ENCODE measurements at regions of chr9 and their contacts with region 1.

Region 1: DNA sequence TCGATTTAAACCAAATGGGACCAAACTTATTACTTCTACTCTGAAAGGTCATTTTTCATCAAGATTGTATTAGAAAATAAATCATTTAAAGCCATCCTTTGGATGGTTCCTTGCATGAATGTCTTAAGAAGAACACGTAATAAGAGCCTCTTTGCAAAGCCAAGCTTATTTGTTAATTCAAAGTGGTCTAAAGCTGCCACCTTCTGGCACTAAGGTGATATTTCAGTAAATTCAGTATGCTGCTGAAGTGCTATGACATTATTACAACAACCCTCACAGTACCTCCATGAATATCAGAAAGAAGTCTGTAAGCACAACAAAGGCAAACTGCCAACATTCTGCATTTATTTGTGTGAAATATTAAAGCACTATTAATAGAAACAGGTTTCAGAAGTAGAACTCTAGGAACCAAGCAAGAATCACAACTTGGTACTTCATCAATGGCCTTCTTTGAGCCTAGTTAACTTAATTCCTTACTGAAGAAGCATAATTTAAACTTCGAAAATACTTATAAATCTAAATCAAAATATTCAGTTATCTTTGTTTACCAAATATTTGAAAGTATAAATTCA is 53.1 kb upstream of the TYRP1 start:
- DNase-seq: peak; percentile 35
- H3K4me3 ChIP-seq: no peak overlapping the region
- H3K27ac ChIP-seq: no peak overlapping the region
- H3K4me1 ChIP-seq: no peaks in the 10 kb centered on the region
- H3K27me3 ChIP-seq: no peaks in the 10 kb centered on the region
- CTCF ChIP-seq: peak; percentile 64 to 72

Region 2: DNA sequence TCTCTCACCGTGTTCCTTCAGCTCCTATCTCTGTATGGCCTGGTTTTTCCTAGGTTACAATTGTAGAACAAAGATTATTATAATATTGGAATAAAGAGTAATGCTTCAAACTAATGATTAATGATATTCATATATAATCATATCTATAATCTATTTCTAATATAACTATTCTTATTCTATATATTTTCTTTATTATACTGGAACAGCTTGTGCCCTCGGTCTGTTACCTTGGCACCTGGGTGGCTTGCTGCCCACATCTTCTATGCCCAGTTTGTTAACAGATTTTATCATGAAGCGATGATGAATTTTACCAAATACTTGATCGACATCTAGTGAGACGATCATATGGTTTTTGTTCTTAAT is 310.5 kb before region 1 on chr9:
- CTCF ChIA-PET with region 1: no interaction called
- dilution Hi-C with region 1: no loop called
- in situ Hi-C with region 1: no loop called
- intact Hi-C with region 1: loop called (anchors 10 kb)
- DNase-seq: no peak
- H3K4me3 ChIP-seq: no peak overlapping the region
- H3K27ac ChIP-seq: no peak overlapping the region
- H3K4me1 ChIP-seq: no peaks in the 10 kb centered on the region
- H3K27me3 ChIP-seq: no peaks in the 10 kb centered on the region
- CTCF ChIP-seq: no peak

Region 3: DNA sequence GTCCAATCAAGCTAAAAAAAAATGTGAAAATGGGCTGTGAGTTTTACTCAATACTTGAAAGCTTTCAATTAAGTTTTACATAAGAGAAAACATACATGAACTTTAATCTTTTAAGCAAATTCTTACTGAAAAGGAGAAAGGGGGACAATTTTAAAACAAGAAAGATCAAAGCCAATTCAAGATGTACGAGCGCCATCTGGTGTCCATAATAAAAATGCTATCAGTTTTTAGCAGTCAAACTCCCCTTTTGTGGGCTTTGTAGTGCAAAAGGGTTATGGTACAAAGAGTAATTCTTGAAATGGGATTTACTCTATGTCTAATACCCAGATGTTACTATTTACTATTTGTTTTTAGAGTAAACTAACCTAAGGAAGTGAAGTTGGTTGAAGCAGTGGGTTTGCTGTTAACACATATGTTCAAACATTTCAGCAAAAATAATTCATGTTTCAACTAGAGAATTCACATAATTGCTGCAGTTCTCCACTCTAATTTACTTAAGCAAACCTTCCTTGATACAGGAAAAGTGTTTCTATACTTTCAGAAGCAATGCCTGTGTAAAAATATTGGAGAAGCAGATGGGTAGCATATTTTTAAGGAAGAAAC is 175.1 kb before region 1 on chr9:
- CTCF ChIA-PET with region 1: no interaction called
- dilution Hi-C with region 1: no loop called
- in situ Hi-C with region 1: no loop called
- intact Hi-C with region 1: loop called (anchors 10 kb)
- DNase-seq: no peak
- H3K4me3 ChIP-seq: no peak overlapping the region
- H3K27ac ChIP-seq: no peak overlapping the region
- H3K4me1 ChIP-seq: no peaks in the 10 kb centered on the region
- H3K27me3 ChIP-seq: no peaks in the 10 kb centered on the region
- CTCF ChIP-seq: peak; percentile 58 to 66

Region 4: GRCh38 chr9:12554636-12555035 is 85.5 kb before region 1 on chr9:
- CTCF ChIA-PET with region 1: interaction called, 3 read pairs
- dilution Hi-C with region 1: no loop called
- in situ Hi-C with region 1: no loop called
- intact Hi-C with region 1: loop called (anchors 2 kb)
- DNase-seq: no peak
- H3K4me3 ChIP-seq: no peak overlapping the region
- H3K27ac ChIP-seq: no peak overlapping the region
- H3K4me1 ChIP-seq: no peaks in the 10 kb centered on the region
- H3K27me3 ChIP-seq: no peaks in the 10 kb centered on the region
- CTCF ChIP-seq: peak; percentile 11 to 31

Region 5: GRCh38 chr9:12584656-12585522 is 55.2 kb before region 1 on chr9:
- CTCF ChIA-PET with region 1: no interaction called
- dilution Hi-C with region 1: no loop called
- in situ Hi-C with region 1: no loop called
- intact Hi-C with region 1: no loop called
- DNase-seq: no peak
- H3K4me3 ChIP-seq: no peak overlapping the region
- H3K27ac ChIP-seq: no peak overlapping the region
- H3K4me1 ChIP-seq: no peaks in the 10 kb centered on the region
- H3K27me3 ChIP-seq: peaks cover 2% of the 10 kb centered on the region
- CTCF ChIP-seq: no peak

Region 6: GRCh38 chr9:12684923-12685468 is 44.9 kb after region 1 on chr9:
- CTCF ChIA-PET with region 1: no interaction called
- dilution Hi-C with region 1: no loop called
- in situ Hi-C with region 1: no loop called
- intact Hi-C with region 1: no loop called
- DNase-seq: no peak
- H3K4me3 ChIP-seq: no peak overlapping the region
- H3K27ac ChIP-seq: no peak overlapping the region
- H3K4me1 ChIP-seq: peaks cover 6% of the 10 kb centered on the region
- H3K27me3 ChIP-seq: no peaks in the 10 kb centered on the region
- CTCF ChIP-seq: no peak

Region 7: GRCh38 chr9:12702160-12702758 is 62.2 kb after region 1 on chr9:
- CTCF ChIA-PET with region 1: no interaction called
- dilution Hi-C with region 1: no loop called
- in situ Hi-C with region 1: no loop called
- intact Hi-C with region 1: no loop called
- DNase-seq: peak; percentile 41
- H3K4me3 ChIP-seq: no peak overlapping the region
- H3K27ac ChIP-seq: no peak overlapping the region
- H3K4me1 ChIP-seq: peaks cover 2% of the 10 kb centered on the region
- H3K27me3 ChIP-seq: no peaks in the 10 kb centered on the region
- CTCF ChIP-seq: peak; percentile 46 to 47